Sigmoid colon (tissue), 7 donors: ENCODE measurements at regions of chr3 and their contacts with region 1.

Region 1: GRCh38 chr3:54853573-54854404 is 74.1 kb downstream of the LRTM1 start:
- DNase-seq: peak; percentile 86
- H3K4me3 ChIP-seq: no peak overlapping the region
- H3K27ac ChIP-seq: no peak overlapping the region
- H3K4me1 ChIP-seq: peaks cover 0 to 9% (median 6%) of the 10 kb centered on the region in 4 donors
- H3K27me3 ChIP-seq: no peaks in the 10 kb centered on the region
- CTCF ChIP-seq: peak; percentile 14 to 92 (median 88)
- EP300 ChIP-seq: no peak
- POLR2A ChIP-seq: no peak

Region 2: DNA sequence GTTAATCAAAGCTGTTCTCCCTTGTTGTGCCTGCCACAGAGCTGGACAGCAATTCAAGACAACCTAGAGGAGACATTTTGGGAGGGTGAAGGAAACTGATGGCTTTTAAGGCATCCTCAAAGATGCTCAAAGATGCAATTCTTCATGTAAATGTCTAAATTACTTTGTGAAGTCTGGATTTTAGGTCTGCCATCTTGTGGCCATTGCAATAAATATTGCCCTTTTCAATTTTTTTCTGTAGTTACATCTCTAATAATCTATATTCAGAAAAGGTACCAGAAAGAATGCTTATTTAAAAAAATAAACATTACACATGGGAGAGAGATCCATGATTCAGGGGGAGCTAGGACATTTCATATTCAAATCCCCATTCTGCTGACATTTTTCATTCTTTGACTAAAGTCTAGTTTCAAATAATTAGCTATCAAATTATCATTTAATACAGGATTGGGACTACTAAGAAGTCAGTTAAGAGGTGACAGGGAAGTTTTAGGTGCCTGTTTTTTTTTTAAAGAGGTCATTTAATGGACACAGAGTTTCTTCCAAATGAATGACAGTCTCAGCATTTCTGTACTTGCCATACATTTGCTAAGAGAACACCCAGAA is 893.1 kb after region 1 on chr3:
- intact Hi-C with region 1: loop called (anchors 10 kb)
- DNase-seq: no peak
- H3K4me3 ChIP-seq: no peak overlapping the region
- H3K27ac ChIP-seq: no peak overlapping the region
- H3K4me1 ChIP-seq: peaks cover 0 to 5% (median 0%) of the 10 kb centered on the region in 4 donors
- H3K27me3 ChIP-seq: no peaks in the 10 kb centered on the region
- CTCF ChIP-seq: peak in 2 of 4 experiments; percentile 17 to 29
- EP300 ChIP-seq: no peak
- POLR2A ChIP-seq: no peak

Region 3: DNA sequence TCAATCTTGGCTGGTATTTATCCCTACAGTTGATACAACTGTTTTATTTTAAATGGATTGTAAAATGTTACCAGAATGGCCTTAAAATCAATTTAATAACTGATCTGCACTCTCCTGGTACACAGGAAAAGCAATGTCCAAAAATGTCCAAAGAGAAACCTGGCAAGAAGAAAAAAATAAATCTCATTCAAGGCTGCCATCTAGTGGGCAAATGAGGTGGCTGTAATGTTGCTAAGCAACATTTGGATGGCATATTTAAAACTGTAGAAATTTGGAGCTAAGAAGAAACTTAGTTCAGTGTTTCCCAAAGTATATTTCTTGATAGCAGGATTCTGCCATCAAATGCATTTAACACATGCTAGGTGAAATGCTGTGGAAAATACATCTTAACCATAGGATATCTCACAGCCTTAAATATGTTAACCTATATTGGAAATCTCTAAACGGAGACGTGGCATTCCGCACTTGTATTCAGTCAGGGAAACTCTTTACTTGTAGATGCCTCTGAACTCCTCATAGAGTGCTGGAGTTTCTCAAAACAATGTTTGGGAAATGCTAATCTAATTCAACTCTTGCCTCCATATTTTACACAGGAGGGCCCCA is 1397.7 kb after region 1 on chr3:
- intact Hi-C with region 1: loop called (anchors 5 kb)
- DNase-seq: no peak
- H3K4me3 ChIP-seq: no peak overlapping the region
- H3K27ac ChIP-seq: no peak overlapping the region
- H3K4me1 ChIP-seq: no peaks in the 10 kb centered on the region
- H3K27me3 ChIP-seq: no peaks in the 10 kb centered on the region
- CTCF ChIP-seq: peak; percentile 38 to 78 (median 62)
- EP300 ChIP-seq: no peak
- POLR2A ChIP-seq: no peak